IMR-90 (cell line): ENCODE measurements at regions of chr12 and their contacts with region 1.

Region 1: GRCh38 chr12:98709022-98709421 is 63.9 kb downstream of the APAF1 start:
- DNase-seq: no peak
- ATAC-seq: no peak
- H3K4me3 ChIP-seq: no peak overlapping the region
- H3K27ac ChIP-seq: no peak overlapping the region
- H3K4me1 ChIP-seq: no peaks in the 10 kb centered on the region
- H3K27me3 ChIP-seq: no peaks in the 10 kb centered on the region
- CTCF ChIP-seq: no peak
- POLR2A ChIP-seq: no peak
- RAD21 ChIP-seq: no peak

Region 2: GRCh38 chr12:98332642-98333041 is 376.4 kb before region 1 on chr12:
- CTCF ChIA-PET with region 1: no interaction called
- POLR2A ChIA-PET with region 1: no interaction called
- dilution Hi-C with region 1: no loop called
- in situ Hi-C with region 1: no loop called
- intact Hi-C with region 1: loop called (anchors 5 kb)
- DNase-seq: no peak
- ATAC-seq: no peak
- H3K4me3 ChIP-seq: no peak overlapping the region
- H3K27ac ChIP-seq: no peak overlapping the region
- H3K4me1 ChIP-seq: no peaks in the 10 kb centered on the region
- H3K27me3 ChIP-seq: no peaks in the 10 kb centered on the region
- CTCF ChIP-seq: no peak
- POLR2A ChIP-seq: no peak
- RAD21 ChIP-seq: no peak

Region 3: DNA sequence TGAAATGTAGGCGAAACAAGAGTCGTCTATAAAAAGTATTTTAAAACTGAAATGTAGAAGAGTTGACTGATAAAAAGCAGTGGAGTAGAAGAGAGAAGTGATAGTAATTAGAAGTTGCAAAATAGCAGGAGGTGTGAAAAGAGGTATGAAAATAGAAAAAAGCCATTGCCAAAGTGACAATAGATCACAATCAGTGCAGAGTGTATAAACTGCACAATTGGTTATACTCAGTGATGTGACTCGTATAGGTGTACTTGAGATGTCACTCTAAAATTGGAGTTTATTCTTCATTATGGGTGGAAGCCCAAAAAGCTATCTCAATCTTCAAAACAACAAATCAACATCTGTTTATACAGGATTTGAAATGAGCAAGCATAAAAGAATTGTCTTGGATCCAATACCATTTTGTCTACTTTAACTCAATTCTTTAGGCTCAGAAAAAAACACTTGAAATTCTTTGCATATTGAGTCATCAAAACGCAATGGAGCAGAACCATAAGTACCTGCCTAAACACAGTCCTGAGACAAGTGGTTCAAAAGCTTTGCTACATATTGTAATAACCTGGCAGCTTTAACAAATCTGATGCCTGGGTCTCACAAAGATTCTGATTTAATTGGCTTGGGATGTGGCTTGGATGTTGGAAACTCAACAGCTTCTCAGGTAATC is 73.2 kb before region 1 on chr12:
- CTCF ChIA-PET with region 1: no interaction called
- POLR2A ChIA-PET with region 1: no interaction called
- dilution Hi-C with region 1: no loop called
- in situ Hi-C with region 1: no loop called
- intact Hi-C with region 1: no loop called
- DNase-seq: peak; percentile 77
- ATAC-seq: peak; percentile 92
- H3K4me3 ChIP-seq: no peak overlapping the region
- H3K27ac ChIP-seq: no peak overlapping the region
- H3K4me1 ChIP-seq: peaks cover 6% of the 10 kb centered on the region; the same call in 1 of the 2 replicates
- H3K27me3 ChIP-seq: no peaks in the 10 kb centered on the region
- CTCF ChIP-seq: no peak
- POLR2A ChIP-seq: no peak
- RAD21 ChIP-seq: no peak